ENCODE measurements at regions of chr2 and their contacts with region 1.

Region 1: DNA sequence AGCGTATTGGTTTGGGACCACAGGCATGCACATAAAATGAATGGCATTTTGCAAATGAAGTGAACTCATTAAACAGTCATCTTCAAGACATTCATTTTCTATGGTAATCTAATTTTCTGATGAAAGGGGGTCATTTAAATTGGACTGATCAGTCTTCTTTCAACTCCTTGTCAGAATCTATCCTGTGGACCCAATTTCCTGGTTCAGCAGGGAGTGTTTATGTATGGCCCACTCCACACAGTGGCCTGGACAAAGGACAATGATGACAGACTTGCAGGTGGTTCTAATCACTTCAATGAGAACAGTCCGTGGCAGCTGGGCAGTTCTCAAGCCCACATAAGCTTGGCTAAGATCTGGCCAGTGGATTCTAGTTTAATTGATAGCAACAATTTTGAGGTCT is 448.1 kb downstream of the DCDC2C start:
- DNase-seq: no peak
- H3K4me3 ChIP-seq: no peak overlapping the region
- H3K27ac ChIP-seq: no peak overlapping the region
- H3K4me1 ChIP-seq: no peaks in the 10 kb centered on the region
- H3K27me3 ChIP-seq: no peaks in the 10 kb centered on the region
- CTCF ChIP-seq: no peak

Region 2: DNA sequence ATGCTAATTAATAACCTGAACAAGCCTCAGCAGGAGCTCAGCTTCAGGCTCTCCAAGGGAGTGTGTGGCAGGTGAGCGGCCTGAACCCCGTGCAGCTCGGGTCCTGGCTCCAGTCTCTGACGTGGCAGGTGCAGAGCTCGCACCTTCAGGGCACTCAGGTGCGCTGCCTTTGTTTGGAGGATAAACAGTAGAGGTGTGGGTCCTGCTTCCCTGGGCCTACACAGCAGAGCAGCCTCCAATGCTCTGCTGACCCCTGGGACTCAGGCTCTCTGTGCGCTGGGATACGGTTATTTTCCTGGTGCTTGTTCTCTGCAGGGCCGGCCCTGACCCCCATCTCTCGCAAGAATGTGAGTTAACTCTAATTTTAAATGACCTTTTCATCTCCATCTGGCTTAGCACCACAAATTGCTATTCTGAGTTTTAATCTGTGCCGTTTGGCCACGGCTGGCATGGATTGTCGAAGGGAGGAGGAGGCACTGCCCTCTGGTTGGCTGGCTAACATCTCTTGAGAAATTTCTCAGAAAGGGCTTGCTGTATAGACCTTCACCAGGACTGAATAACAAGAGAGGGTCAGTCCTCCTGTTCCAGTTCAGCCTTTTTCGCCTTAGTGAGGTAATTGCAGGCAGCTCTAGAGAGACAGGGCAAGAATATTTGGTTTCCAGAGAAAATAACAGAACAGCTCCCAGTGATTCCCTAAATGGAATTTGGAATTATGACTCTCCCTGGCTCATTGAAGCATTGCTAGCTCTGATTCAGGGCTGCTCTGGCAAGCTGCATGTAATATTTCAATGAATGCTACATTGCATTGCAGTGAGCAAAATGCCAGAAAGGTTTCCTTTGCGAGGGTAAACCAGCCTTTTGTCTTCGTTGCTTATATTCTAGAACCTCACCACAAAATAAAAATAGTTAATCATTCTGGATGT is 286.3 kb before region 1 on chr2:
- intact Hi-C with region 1: no loop called
- DNase-seq: no peak
- H3K4me3 ChIP-seq: no peak overlapping the region
- H3K27ac ChIP-seq: peak overlapping the region in 1 of 2 donors; percentile 42
- H3K4me1 ChIP-seq: peaks cover 0 to 24% (median 15%) of the 10 kb centered on the region in 4 donors
- H3K27me3 ChIP-seq: no peaks in the 10 kb centered on the region
- CTCF ChIP-seq: no peak

Region 3: GRCh38 chr2:3959372-3959771 is 192.1 kb before region 1 on chr2:
- intact Hi-C with region 1: no loop called
- DNase-seq: no peak
- H3K4me3 ChIP-seq: no peak overlapping the region
- H3K27ac ChIP-seq: no peak overlapping the region
- H3K4me1 ChIP-seq: no peaks in the 10 kb centered on the region
- H3K27me3 ChIP-seq: peaks cover 0 to 16% of the 10 kb centered on the region in 2 donors
- CTCF ChIP-seq: peak; percentile 35 to 38

Region 4: GRCh38 chr2:5587766-5588165 is 1436.2 kb after region 1 on chr2:
- intact Hi-C with region 1: loop called (anchors 5 kb)
- DNase-seq: no peak
- H3K4me3 ChIP-seq: no peak overlapping the region
- H3K27ac ChIP-seq: no peak overlapping the region
- H3K4me1 ChIP-seq: no peaks in the 10 kb centered on the region
- H3K27me3 ChIP-seq: no peaks in the 10 kb centered on the region
- CTCF ChIP-seq: no peak